Heart left ventricle (tissue), 16 donors: ENCODE measurements at regions of chr4 and their contacts with region 1.

Region 1: GRCh38 chr4:73142995-73143547 is 73.6 kb upstream of the COX18 start:
- DNase-seq: no peak
- ATAC-seq: no peak
- H3K4me3 ChIP-seq: no peak overlapping the region
- H3K27ac ChIP-seq: no peak overlapping the region
- H3K4me1 ChIP-seq: peaks cover 0 to 6% (median 0%) of the 10 kb centered on the region in 12 donors
- H3K27me3 ChIP-seq: no peaks in the 10 kb centered on the region
- CTCF ChIP-seq: peak in 8 of 12 donors; percentile 7 to 41 (median 16)
- POLR2A ChIP-seq: no peak

Region 2: GRCh38 chr4:73069338-73070073 is 73.6 kb before region 1 on chr4 and contains the start of gene COX18:
- intact Hi-C with region 1: loop called in 1 of 10 experiments (anchors 10 kb)
- DNase-seq: peak; percentile 97 to 99 (median 99)
- ATAC-seq: peak; percentile 96 to 99 (median 97)
- H3K4me3 ChIP-seq: peak within 1 kb of the TSS; percentile 69 to 96 (median 82)
- H3K27ac ChIP-seq: peak within 1 kb of the TSS; percentile 88 to 99 (median 97)
- H3K4me1 ChIP-seq: peaks cover 0 to 24% (median 15%) of the 10 kb centered on the region in 12 donors
- H3K27me3 ChIP-seq: no peaks in the 10 kb centered on the region
- CTCF ChIP-seq: peak in 3 of 12 donors; percentile 6 to 12 (median 11)
- POLR2A ChIP-seq: peak in 1 of 2 donors; percentile 91
- total RNA-seq, gene COX18: 14.0 to 32.2 (median 17.9) TPM

Region 3: DNA sequence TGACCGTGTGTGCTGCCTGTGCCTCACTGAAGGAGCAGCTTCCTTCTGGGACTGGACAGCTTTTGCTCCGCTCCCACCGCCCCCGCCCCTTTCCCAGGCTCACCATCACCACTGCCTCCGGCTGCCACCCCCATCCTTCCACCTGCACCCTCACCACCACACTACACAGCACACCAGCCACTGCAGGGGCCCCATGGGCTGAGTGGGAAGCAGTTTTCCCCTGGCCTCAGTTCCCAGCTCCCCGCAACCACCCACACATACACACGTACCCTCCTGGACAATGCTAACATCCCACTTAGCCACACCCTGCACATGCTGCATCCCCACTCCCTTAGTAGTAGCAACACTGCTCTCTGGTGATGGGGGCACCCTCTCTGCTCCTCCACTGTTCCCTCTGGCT is 43.9 kb before region 1 on chr4:
- intact Hi-C with region 1: loop called in 1 of 10 experiments (anchors 5 kb)
- DNase-seq: no peak
- ATAC-seq: peak in 3 of 4 donors; percentile 16 to 64 (median 24)
- H3K4me3 ChIP-seq: no peak overlapping the region
- H3K27ac ChIP-seq: no peak overlapping the region
- H3K4me1 ChIP-seq: peaks cover 0 to 3% (median 0%) of the 10 kb centered on the region in 12 donors
- H3K27me3 ChIP-seq: no peaks in the 10 kb centered on the region
- CTCF ChIP-seq: no peak
- POLR2A ChIP-seq: no peak

Region 4: GRCh38 chr4:73251384-73251783 is 108.3 kb after region 1 on chr4:
- intact Hi-C with region 1: loop called in 6 of 10 experiments (anchors 5 to 10 kb)
- DNase-seq: no peak
- ATAC-seq: no peak
- H3K4me3 ChIP-seq: no peak overlapping the region
- H3K27ac ChIP-seq: no peak overlapping the region
- H3K4me1 ChIP-seq: peaks cover 3 to 60% (median 37%) of the 10 kb centered on the region in 12 donors
- H3K27me3 ChIP-seq: no peaks in the 10 kb centered on the region
- CTCF ChIP-seq: no peak
- POLR2A ChIP-seq: no peak

Region 5: DNA sequence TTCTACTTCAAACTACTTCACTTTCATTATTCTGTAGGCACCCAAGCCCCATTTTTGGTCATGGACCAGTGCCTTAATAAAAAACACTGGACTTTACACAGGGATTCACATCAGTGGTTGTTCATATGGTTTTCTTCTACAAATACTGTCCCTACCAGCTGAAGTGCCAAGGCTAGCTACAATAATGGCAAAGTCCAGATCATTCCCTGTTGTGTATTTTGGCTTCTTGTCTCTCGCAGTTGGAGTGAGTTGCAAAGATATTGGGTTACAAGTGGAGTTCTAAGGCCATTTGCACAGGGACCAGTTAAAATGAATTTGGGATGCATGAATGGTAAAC is 132.2 kb after region 1 on chr4:
- intact Hi-C with region 1: no loop called
- DNase-seq: no peak
- ATAC-seq: no peak
- H3K4me3 ChIP-seq: no peak overlapping the region
- H3K27ac ChIP-seq: no peak overlapping the region
- H3K4me1 ChIP-seq: peaks cover 0 to 3% (median 0%) of the 10 kb centered on the region in 12 donors
- H3K27me3 ChIP-seq: no peaks in the 10 kb centered on the region
- CTCF ChIP-seq: no peak
- POLR2A ChIP-seq: no peak